Mucosa of descending colon (tissue), 3 donors: ENCODE measurements at regions of chr3 and their contacts with region 1.

Region 1: DNA sequence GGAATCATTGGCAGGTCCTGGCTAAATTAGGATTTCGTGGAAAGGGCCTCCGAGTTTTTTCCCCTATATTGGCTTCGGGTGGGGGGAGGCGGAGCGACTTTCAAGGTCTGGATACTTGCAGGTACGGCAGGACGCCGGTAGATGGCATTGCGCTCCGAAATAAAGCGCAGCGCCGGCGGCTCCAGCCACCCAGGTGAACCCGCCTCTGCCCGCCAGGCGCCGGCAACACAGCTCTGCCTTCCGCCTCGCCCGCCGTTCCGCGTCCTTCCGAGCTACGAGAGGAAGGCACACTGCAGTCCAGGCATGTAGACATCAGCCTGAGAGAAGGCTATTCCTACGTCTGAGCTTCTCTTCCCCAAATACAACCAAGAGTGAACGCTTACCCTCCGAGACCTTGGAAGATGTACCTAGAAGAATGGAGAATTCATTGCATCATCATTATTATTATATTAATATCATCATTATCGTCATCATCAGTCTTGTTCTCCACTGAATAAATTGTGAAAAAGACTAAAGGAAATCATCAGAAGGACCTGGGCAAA is 514.1 kb downstream of the MECOM start:
- DNase-seq: peak; percentile 88 to 92 (median 89)
- ATAC-seq: peak; percentile 85
- H3K4me3 ChIP-seq: no peak overlapping the region
- H3K4me1 ChIP-seq: peaks cover 14% of the 10 kb centered on the region
- CTCF ChIP-seq: peak; percentile 70

Region 2: DNA sequence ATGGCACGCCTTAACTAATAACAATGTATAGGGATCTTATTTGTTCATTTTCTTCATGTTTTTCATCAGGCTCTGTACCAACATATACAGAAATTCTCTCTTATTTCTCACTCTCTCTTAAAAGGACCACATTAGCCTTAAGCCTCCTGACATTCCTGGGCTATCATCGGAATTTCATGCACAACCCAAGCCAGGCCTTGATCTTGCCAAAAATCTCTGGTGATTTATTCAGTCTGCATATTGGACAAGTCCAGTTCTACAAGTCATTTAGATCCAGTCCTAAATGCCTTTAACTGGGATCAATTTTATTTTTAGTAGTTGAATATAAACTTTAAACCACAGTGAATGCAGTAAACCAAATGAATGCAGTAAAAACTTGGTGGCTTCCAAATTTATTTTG is 128.7 kb after region 1 on chr3:
- intact Hi-C with region 1: loop called in 1 of 2 experiments (anchors 10 kb)
- DNase-seq: no peak
- ATAC-seq: no peak
- H3K4me3 ChIP-seq: no peak overlapping the region
- H3K4me1 ChIP-seq: peaks cover 8% of the 10 kb centered on the region
- CTCF ChIP-seq: no peak

Region 3: DNA sequence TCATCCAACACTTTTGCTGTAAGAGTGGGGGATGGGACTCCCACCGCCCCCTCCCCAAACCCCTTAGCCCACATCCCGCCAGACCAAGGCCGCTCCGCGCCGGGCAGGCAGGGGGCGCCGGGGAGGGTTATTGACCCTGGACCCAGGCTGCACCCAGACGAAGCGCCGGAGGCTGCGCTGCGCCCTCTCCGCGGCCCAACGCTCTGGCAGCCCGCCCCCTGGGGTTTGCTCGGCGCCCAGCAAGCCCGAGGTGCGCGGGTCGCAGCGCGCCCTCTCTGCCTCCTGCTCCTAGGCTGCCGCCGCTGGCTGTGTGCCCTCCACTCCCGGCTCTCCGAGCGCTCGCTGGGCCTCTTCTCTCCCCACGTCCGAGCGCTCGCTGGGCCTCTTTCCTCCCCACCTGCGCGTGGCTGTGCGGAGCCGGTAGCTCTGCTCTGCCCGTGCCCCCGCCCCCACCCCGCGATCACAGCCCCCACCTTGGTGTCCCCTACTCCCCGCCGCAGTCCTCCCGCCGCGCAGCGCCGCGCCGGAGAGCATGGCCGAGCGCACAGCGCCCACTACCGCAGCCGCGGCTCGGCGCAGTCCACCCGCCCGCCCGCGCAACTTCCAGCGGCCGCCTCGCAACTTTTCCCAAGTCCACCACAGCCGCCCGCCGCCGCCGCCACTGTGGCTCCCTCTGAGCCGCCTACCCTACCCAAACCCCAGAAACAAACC is 512.9 kb after region 1 on chr3:
- intact Hi-C with region 1: loop called (anchors 5 to 10 kb)
- DNase-seq: peak; percentile 80 to 89 (median 82)
- ATAC-seq: peak; percentile 88
- H3K4me3 ChIP-seq: peak overlapping the region; percentile 40
- H3K4me1 ChIP-seq: peaks cover 24% of the 10 kb centered on the region
- CTCF ChIP-seq: peak; percentile 60

Region 4: GRCh38 chr3:169668957-169669681 is 519.7 kb after region 1 on chr3:
- intact Hi-C with region 1: loop called (anchors 5 to 10 kb)
- DNase-seq: peak; percentile 84 to 88 (median 85)
- ATAC-seq: peak; percentile 93
- H3K4me3 ChIP-seq: no peak overlapping the region
- H3K4me1 ChIP-seq: peaks cover 11% of the 10 kb centered on the region
- CTCF ChIP-seq: peak; percentile 68